ENCODE measurements at regions of chr1 and their contacts with region 1.

Region 1: DNA sequence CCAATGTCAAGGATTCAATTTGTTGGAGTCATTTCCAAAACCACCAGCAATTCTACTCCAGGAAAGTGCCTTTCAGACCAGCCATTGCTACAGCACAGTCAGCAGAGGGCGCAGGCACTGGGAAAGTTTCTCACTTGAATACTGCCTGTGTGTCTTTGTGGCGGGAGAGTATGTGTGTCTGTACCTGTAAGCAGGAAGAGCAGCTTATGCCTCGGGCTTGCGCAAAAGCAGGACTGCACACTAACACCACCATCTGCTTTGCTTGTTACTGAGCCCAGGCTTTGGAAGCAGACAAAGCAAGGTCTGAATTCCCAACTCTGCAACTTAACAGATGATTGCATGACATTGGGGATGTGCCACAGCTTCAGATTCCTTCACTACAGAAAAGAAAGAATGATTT is 7.0 kb upstream of the CTSE start:
- DNase-seq: peak; percentile 84
- H3K4me3 Mint-ChIP-seq: no peak overlapping the region
- H3K27ac Mint-ChIP-seq: no peak overlapping the region
- H3K4me1 Mint-ChIP-seq: peaks cover 22% of the 10 kb centered on the region
- H3K27me3 Mint-ChIP-seq: peaks cover 39% of the 10 kb centered on the region

Region 2: GRCh38 chr1:205858141-205858961 is 172.4 kb before region 1 on chr1:
- CTCF ChIA-PET with region 1: no interaction called
- POLR2A ChIA-PET with region 1: no interaction called
- DNase-seq: no peak
- H3K4me3 Mint-ChIP-seq: no peak overlapping the region
- H3K27ac Mint-ChIP-seq: no peak overlapping the region
- H3K4me1 Mint-ChIP-seq: peaks cover 3% of the 10 kb centered on the region
- H3K27me3 Mint-ChIP-seq: peaks cover 26% of the 10 kb centered on the region

Region 3: DNA sequence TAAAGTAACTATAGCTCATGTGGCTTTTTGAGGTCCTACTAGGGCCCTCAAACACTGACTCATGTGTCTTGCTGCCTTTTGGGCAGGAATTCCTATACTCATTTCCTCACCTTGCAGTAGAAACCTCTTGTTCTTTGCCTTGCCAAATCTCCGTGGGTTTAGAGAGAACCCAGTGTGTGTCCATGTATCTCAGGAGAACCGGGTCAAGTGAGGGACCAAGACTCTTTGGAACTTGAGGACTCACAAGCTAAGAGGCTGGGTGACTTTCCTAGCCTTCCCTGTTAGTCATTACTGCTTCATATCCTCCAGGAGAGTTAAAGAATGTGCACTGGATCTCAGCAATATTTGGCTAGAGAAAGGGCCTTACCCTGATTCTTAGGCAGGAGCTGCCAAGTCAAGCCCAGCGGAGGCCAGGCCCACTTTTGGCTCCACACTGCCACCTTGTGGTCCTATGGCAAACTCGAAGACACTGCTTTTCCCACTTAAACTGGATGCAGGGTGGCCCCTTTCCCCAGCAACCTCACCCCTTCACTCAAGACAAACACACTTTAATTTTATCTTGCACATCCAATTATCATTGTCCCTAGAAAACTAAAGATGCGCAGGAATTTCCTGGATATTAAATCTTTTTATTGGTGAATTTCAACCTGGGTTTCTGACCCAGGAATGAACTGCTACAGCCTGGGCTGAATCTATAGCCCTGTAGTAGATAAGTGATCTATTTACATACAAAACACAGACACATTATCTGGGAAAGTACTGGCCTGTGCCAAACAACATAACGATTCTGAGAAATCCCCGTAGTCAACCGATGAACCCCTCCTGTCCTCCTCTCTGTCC is 75.8 kb after region 1 on chr1:
- CTCF ChIA-PET with region 1: interaction called, 11 read pairs
- POLR2A ChIA-PET with region 1: no interaction called
- DNase-seq: peak; percentile 85
- H3K4me3 Mint-ChIP-seq: no peak overlapping the region
- H3K27ac Mint-ChIP-seq: no peak overlapping the region
- H3K4me1 Mint-ChIP-seq: peaks cover 8% of the 10 kb centered on the region
- H3K27me3 Mint-ChIP-seq: peaks cover 13% of the 10 kb centered on the region

Measured in activated CD4-positive, alpha-beta T cell treated with anti-CD3 and anti-CD28 coated beads, Interleukin-2, amount 10 ng/mL, durations not matched to agents 7 days and 5 days (primary cell).